ENCODE measurements at regions of chr1 and their contacts with region 1.

Region 1: GRCh38 chr1:31789259-31790065 is 25.3 kb upstream of the ADGRB2 start:
- DNase-seq: peak; percentile 94 to 100 (median 98)

Region 2: GRCh38 chr1:31663622-31664452 is 125.6 kb before region 1 on chr1:
- intact Hi-C with region 1: loop called (anchors 5 kb)
- DNase-seq: peak in 41 of 42 donors; percentile 45 to 91 (median 73)

Region 3: GRCh38 chr1:31701137-31701736 is 88.2 kb before region 1 on chr1:
- intact Hi-C with region 1: no loop called
- DNase-seq: peak; percentile 78 to 98 (median 92)

Region 4: GRCh38 chr1:31762726-31763670 is 26.5 kb before region 1 on chr1:
- intact Hi-C with region 1: loop called (anchors 2 kb)
- DNase-seq: peak; percentile 59 to 94 (median 86)

Region 5: DNA sequence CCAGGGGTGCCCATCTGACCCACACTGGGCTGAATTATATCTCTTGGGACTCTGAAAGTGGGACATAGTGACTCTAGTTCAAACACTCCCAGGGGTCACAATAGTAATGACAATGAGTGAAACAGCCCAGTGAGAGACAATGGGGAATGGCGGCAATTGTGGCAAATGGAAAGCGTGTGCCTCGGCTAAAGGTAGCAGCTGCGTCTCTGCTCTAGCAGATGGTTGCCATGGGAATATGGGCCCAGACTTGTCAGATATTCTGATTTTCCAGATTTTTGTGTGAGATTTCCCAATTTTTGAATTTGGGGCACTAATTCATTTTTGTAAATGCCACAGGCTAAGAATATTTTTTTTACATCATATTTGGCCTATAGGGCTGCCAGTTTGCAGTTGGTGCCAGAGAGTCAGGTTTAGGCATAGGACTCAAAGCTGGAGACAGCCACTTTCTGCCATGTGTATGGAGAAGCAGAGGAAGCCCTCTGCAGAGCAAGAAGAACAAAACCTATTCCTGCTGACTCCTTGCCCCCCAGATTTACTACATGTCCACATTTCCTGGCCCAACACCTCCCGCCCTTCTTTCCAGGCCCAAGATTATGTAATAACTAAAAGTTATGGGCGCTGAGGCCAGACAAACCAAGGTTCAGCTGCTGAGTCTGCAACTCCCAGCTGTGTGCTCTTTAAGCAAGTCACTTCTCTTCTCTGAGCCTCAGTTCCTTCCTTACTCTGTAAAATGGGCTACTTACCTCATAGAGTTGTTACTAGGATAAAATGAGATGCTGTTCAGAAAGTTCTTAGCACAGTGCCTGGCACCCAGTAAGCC is 170.3 kb after region 1 on chr1:
- intact Hi-C with region 1: loop called (anchors 10 kb)
- DNase-seq: peak in 8 of 42 donors; percentile 16 to 53 (median 27)

Measured in head of caudate nucleus (tissue), 42 donors.